Activated T-helper 1 cell treated with anti-CD3 and anti-CD28 coated beads, Interleukin-12 subunit alpha, Interleukin-12 subunit beta, Interleukin-2, Interleukin-4 antibody, amounts not matched to agents 30 ng/mL and 10 ng/mL and 1 ng/mL, durations not matched to agents 14 hours and 24 hours and 36 hours (primary cell): ENCODE measurements at regions of chr6 and their contacts with region 1.

Region 1: GRCh38 chr6:109009236-109009961 is 85.2 kb downstream of the SESN1 start:
- DNase-seq: peak; percentile 87
- H3K4me3 Mint-ChIP-seq: peak overlapping the region; percentile 92
- H3K27ac Mint-ChIP-seq: peak overlapping the region; percentile 84
- H3K4me1 Mint-ChIP-seq: peaks cover 31% of the 10 kb centered on the region
- H3K27me3 Mint-ChIP-seq: no peaks in the 10 kb centered on the region

Region 2: GRCh38 chr6:107820338-107821261 is 1188.8 kb before region 1 on chr6:
- intact Hi-C with region 1: loop called (anchors 10 kb)
- DNase-seq: peak; percentile 27
- H3K4me3 Mint-ChIP-seq: peak overlapping the region; percentile 83
- H3K27ac Mint-ChIP-seq: peak overlapping the region; percentile 97
- H3K4me1 Mint-ChIP-seq: peaks cover 88% of the 10 kb centered on the region
- H3K27me3 Mint-ChIP-seq: no peaks in the 10 kb centered on the region

Region 3: DNA sequence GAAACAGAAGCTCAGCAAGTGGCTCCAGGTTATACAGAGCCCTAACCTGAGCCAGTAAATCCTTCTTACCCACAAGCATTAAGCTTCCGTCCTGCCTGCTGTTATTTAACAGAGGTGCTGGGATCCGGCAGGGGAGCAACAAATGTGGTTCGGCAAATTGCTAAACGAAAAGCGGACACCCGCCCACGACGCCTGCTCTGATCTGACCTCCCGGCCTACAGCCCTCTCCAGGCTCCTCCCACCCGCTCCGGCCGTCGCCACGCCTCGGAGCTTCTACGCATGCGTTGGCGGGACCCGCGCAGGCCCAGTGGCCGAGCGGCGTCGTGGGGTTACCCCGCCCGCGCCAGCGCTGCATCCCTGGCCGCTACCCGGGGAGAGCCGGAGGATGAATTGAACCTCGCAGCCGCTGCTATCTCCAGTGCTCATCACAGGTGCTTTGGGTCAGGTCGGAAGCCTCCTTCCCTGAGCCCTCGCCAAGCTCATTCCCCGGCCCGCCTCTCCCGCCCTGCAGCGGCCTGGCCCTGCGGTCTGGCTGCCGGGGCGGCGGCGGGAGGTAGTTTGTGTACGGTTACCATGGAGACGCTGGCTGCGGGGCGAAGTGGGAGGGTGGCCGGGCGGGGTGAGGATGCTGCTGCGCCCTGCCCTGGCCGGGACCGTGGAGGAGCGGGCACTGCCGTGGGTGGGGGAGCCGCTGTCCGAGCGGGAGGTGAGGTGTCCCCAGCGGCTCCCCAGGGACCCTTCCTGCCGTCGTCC is 161.1 kb before region 1 on chr6 and contains the start of gene ARMC2:
- intact Hi-C with region 1: loop called (anchors 2 kb)
- DNase-seq: peak; percentile 88
- H3K4me3 Mint-ChIP-seq: peak within 1 kb of the TSS; percentile 89
- H3K27ac Mint-ChIP-seq: peak within 1 kb of the TSS; percentile 71
- H3K4me1 Mint-ChIP-seq: peaks cover 31% of the 10 kb centered on the region
- H3K27me3 Mint-ChIP-seq: peaks cover 25% of the 10 kb centered on the region
- total RNA-seq, gene ARMC2: 3.9 and 4.6 TPM in 2 replicates

Region 4: GRCh38 chr6:108921547-108922361 is 87.6 kb before region 1 on chr6:
- intact Hi-C with region 1: loop called (anchors 1 kb)
- DNase-seq: no peak
- H3K4me3 Mint-ChIP-seq: peak overlapping the region; percentile 8
- H3K27ac Mint-ChIP-seq: peak overlapping the region; percentile 63
- H3K4me1 Mint-ChIP-seq: peaks cover 34% of the 10 kb centered on the region
- H3K27me3 Mint-ChIP-seq: peaks cover 22% of the 10 kb centered on the region

Region 5: GRCh38 chr6:109073344-109074132 is 64.1 kb after region 1 on chr6:
- intact Hi-C with region 1: loop called (anchors 1 kb)
- DNase-seq: peak; percentile 31
- H3K4me3 Mint-ChIP-seq: no peak overlapping the region
- H3K27ac Mint-ChIP-seq: no peak overlapping the region
- H3K4me1 Mint-ChIP-seq: peaks cover 21% of the 10 kb centered on the region
- H3K27me3 Mint-ChIP-seq: peaks cover 12% of the 10 kb centered on the region

Region 6: GRCh38 chr6:109304284-109305015 is 295.1 kb after region 1 on chr6:
- intact Hi-C with region 1: no loop called
- DNase-seq: no peak
- H3K4me3 Mint-ChIP-seq: no peak overlapping the region
- H3K27ac Mint-ChIP-seq: peak overlapping the region; percentile 43
- H3K4me1 Mint-ChIP-seq: peaks cover 12% of the 10 kb centered on the region
- H3K27me3 Mint-ChIP-seq: peaks cover 4% of the 10 kb centered on the region

Region 7: DNA sequence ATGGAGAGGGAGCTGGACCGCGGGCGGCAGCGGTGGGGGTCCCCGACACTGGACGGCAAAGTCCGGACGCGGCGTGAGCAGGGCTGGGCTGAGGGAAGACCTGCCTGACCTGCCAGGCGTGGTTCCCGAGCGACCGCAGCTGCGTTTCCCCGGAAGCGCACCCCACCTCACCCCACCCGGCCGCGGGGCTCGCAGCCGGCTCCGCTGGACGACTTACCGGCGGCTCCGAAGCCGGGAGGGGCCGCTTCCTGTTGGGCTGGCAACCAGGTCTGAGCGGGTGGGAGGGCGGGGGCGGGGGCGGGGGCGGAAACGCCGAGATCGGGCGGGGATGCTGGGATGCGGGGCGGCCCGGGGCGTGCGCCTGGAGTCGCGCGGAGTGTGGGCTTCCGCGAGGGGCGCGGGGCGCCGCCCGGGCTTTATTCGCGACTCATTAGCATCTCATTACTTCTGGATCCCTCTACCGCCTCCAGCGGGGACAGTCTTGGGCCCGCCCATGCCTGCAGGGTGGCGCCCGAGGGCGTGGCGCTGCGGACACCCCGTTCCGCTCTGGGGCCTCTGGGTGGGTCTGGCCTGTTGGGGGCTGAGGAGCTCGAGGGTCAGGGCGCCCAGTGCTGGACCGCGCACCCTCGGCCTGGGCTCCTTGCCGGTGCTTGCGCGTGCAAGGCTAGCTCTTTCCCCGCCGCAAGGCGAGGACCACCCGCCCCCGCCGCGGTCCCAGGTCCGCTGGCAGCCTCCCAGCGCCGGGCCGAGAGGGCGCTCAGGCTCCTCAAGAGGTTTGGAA is 446.3 kb after region 1 on chr6 and contains the start of gene MICAL1:
- intact Hi-C with region 1: loop called (anchors 2 kb)
- DNase-seq: peak; percentile 69
- H3K4me3 Mint-ChIP-seq: peak within 1 kb of the TSS; percentile 97
- H3K27ac Mint-ChIP-seq: peak within 1 kb of the TSS; percentile 97
- H3K4me1 Mint-ChIP-seq: peaks cover 59% of the 10 kb centered on the region
- H3K27me3 Mint-ChIP-seq: no peaks in the 10 kb centered on the region
- total RNA-seq, gene MICAL1: 40.8 and 47.1 TPM in 2 replicates